ENCODE measurements at regions of chr5 and their contacts with region 1.

Region 1: GRCh38 chr5:133977161-133977787 is 8.8 kb upstream of the C5orf15 start:
- DNase-seq: no peak
- H3K4me3 ChIP-seq: no peak overlapping the region
- H3K27ac ChIP-seq: peak overlapping the region; percentile 48
- H3K4me1 ChIP-seq: peaks cover 8% of the 10 kb centered on the region
- H3K27me3 ChIP-seq: no peaks in the 10 kb centered on the region
- CTCF ChIP-seq: no peak

Region 2: DNA sequence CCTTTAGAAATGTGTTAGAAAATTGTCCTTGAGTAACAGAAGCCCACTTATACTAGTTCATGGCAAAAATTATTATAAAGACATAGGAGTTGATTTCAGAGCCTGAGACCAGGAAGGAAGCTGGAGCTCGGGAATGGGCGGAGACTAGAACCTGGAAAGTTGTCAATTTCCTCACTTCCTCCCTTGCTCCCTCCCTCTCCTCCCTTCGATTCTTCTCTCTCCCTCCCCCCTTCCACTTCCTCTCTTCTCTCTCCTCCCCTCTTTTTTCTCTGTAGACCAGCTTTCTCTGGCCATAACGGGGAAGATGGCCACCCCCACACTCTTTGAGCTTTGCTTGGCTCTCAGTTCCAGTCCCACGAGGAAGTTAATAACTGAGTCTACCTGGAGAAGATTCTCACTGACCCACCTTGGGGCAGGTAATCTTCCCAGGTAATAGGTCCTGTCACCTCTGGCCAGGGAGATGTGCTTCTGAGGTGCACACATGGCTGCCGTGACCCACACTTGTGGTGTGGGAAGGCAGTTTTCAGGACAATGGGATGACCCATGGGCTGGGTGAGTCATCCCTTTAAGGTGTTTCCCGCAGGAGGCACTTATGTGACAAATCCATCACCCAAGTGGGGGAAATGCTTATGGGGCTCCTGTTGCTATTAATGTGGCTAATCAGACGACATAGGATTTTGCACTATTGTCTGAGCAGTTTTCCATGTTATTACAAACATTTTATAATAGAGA is 846.7 kb before region 1 on chr5:
- CTCF ChIA-PET with region 1: no interaction called
- dilution Hi-C with region 1: no loop called
- in situ Hi-C with region 1: no loop called
- intact Hi-C with region 1: no loop called
- DNase-seq: peak; percentile 47
- H3K4me3 ChIP-seq: no peak overlapping the region
- H3K27ac ChIP-seq: no peak overlapping the region
- H3K4me1 ChIP-seq: peaks cover 8% of the 10 kb centered on the region
- H3K27me3 ChIP-seq: no peaks in the 10 kb centered on the region
- CTCF ChIP-seq: no peak

Region 3: GRCh38 chr5:133754575-133755169 is 222.6 kb before region 1 on chr5:
- CTCF ChIA-PET with region 1: interaction called, 17 read pairs
- dilution Hi-C with region 1: no loop called
- in situ Hi-C with region 1: no loop called
- intact Hi-C with region 1: no loop called
- DNase-seq: peak; percentile 7
- H3K4me3 ChIP-seq: no peak overlapping the region
- H3K27ac ChIP-seq: no peak overlapping the region
- H3K4me1 ChIP-seq: peaks cover 6% of the 10 kb centered on the region
- H3K27me3 ChIP-seq: no peaks in the 10 kb centered on the region
- CTCF ChIP-seq: peak; percentile 54 to 74

Region 4: GRCh38 chr5:133926489-133927299 is 50.6 kb before region 1 on chr5:
- CTCF ChIA-PET with region 1: no interaction called
- dilution Hi-C with region 1: no loop called
- in situ Hi-C with region 1: no loop called
- intact Hi-C with region 1: no loop called
- DNase-seq: no peak
- H3K4me3 ChIP-seq: no peak overlapping the region
- H3K27ac ChIP-seq: no peak overlapping the region
- H3K4me1 ChIP-seq: no peaks in the 10 kb centered on the region
- H3K27me3 ChIP-seq: no peaks in the 10 kb centered on the region
- CTCF ChIP-seq: no peak